ENCODE measurements at regions of chr1 and their contacts with region 1.

Region 1: DNA sequence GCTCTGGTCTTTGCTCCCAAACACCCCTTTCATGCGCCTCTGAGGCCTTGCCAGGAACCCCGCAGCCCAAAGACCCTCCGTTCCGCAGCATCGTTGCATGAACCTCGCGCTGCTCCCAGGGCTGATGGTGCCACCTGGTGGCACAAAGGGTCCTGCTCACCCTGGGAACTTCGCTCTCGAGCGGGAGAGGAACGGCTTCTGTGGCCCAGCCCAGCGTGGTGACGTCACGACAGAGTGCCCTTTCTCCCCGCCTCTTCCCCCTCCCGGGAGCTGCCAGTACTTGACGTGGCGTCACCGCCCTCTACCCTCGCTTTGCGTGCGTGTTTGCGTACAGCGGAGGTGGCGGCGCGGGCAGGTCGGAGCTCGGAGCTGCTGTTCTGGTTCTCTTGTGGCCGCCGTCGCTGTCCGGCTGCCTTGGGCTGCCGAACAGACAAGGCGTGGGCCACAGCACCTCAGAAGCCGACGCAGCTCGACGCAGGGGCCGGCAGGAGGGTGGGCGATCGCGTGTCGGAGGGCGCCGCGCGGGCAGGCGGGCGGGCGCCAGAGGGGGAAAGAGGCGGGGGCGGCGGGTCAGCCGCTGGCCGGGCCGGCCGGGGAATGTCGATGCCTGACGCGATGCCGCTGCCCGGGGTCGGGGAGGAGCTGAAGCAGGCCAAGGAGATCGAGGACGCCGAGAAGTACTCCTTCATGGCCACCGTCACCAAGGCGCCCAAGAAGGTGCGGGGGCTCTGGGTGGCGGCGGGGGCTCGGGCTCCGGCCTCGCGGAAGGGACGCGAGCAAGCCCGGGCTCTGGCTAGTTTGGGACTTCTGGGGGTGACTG is at the start of gene AHCYL1:
- DNase-seq: peak; percentile 100
- H3K4me3 ChIP-seq: peak within 1 kb of the TSS; percentile 64 to 75 (median 70)
- H3K27ac ChIP-seq: peak within 1 kb of the TSS; percentile 94 to 99 (median 97)
- H3K4me1 ChIP-seq: peaks cover 49 to 74% (median 56%) of the 10 kb centered on the region in 4 donors
- H3K27me3 ChIP-seq: no peaks in the 10 kb centered on the region
- CTCF ChIP-seq: peak in 6 of 7 experiments; percentile 81 to 100 (median 95)
- EP300 ChIP-seq: peak; percentile 83
- POLR2A ChIP-seq: peak in 2 of 4 donors; percentile 96 to 98
- total RNA-seq, gene AHCYL1: 31.0 to 76.3 (median 73.4) TPM

Region 2: DNA sequence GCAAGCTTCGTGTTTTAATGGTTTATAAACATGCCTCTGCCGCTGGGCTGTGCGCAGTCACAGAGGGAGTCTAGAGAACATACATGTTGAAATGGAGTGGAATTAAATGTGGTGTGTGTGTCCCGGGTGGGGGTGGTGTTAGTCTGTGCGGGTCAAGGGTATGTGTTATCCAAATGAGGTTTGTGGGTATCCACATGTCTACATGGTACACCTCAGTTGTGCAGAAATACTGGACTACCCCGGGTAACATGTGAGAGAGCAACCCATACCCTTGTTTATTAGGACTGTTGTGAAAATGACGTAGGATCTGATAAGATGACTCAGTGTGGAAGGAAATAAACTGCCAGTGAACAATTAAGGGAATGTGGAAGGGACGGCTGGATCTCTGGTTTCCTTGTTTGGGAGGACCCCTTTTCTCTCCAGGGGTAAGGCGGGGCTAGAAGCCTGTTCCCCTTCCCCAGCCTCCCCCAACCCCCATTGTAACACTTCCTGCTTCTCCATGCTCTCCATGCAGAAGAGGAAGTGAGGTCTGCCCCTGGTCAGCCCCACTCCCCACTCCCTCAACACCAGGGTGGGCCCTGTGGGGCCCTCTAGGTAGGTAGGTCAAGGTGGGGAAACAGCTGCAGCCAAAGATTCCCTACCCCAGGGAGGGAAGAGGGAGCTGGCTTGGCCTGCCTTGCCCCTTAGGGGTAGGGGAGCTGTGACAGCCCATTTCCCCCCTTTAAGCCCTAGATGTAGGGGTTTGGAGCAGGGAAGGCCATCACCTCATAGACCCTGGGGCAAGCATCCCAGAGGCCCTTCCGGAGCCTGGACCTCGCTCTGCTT is 221.6 kb before region 1 on chr1:
- intact Hi-C with region 1: no loop called
- DNase-seq: peak; percentile 35 to 77
- H3K4me3 ChIP-seq: peak overlapping the region in 3 of 4 donors; percentile 33 to 45 (median 36)
- H3K27ac ChIP-seq: peak overlapping the region; percentile 65 to 89 (median 83)
- H3K4me1 ChIP-seq: peaks cover 21 to 65% (median 33%) of the 10 kb centered on the region in 4 donors
- H3K27me3 ChIP-seq: no peaks in the 10 kb centered on the region
- CTCF ChIP-seq: no peak
- EP300 ChIP-seq: no peak
- POLR2A ChIP-seq: no peak

Region 3: GRCh38 chr1:109895720-109896504 is 88.8 kb before region 1 on chr1:
- intact Hi-C with region 1: no loop called
- DNase-seq: peak in 1 of 2 donors; percentile 64
- H3K4me3 ChIP-seq: no peak overlapping the region
- H3K27ac ChIP-seq: peak overlapping the region in 4 of 5 donors; percentile 44 to 56 (median 48)
- H3K4me1 ChIP-seq: peaks cover 17 to 39% (median 22%) of the 10 kb centered on the region in 4 donors
- H3K27me3 ChIP-seq: no peaks in the 10 kb centered on the region
- CTCF ChIP-seq: no peak
- EP300 ChIP-seq: no peak
- POLR2A ChIP-seq: no peak

Region 4: DNA sequence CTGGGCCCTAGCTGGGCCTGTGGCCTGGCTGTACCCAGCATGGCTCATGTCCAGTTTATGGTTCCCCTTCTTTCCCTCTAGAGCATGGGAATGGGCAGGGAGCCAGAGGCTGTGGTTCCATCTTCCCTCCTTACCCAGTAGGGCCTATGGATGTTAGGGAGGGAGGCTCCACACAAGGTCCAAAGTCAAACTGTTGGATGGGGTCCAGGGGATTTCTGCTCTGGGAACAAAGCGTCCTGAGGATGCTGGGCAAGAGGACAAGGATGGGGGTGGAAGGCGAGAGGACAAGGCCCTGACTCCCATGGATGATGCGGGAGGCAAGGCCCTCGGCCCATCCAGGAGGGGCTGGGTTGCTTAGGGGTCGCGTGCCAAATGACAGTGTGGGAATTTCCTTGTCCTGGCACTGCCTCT is 56.8 kb before region 1 on chr1:
- intact Hi-C with region 1: loop called (anchors 5 kb)
- DNase-seq: peak; percentile 70 to 82
- H3K4me3 ChIP-seq: no peak overlapping the region
- H3K27ac ChIP-seq: peak overlapping the region; percentile 47 to 87 (median 81)
- H3K4me1 ChIP-seq: peaks cover 48 to 86% (median 58%) of the 10 kb centered on the region in 4 donors
- H3K27me3 ChIP-seq: no peaks in the 10 kb centered on the region
- CTCF ChIP-seq: no peak
- EP300 ChIP-seq: no peak
- POLR2A ChIP-seq: no peak